Heart left ventricle (tissue), 16 donors: ENCODE measurements at regions of chr1 and their contacts with region 1.

Region 1: DNA sequence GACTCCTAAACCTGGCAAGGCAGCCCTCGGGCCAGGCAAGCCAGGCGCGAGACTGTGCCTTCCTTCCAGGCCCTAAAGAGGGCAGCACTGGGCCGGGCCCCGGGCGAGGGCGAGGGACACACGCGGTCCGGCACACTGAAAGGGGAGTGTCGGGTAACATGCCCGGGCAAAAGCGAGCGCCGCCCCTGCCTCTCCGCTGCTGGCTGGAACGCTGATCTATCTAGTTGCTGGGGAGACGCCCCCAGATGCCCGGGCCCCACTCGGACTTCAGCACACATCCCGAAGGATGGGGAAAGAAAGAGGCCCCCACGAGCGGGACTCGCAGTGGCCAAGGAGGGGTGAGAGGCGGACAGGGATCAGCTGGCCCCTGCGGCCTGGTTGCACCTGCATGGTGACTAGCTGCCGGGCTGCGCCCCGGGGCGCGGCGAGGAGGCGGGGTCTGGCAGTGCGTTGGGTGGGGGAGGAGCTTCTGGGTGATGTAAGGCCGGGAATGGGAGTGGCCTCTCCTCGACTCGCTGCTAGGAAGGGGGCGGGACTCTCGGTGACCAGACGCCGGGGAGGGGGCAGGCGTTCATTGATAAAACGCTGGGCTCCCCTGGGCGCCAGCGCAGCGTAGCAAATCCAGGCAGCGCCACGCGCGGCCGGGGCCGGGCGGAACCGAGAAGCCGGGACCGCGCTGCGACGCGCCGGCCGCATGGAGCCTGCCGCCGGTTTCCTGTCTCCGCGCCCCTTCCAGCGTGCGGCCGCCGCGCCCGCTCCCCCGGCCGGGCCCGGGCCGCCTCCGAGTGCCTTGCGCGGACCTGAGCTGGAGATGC is at the start of gene PLK3:
- DNase-seq: peak; percentile 98 to 99 (median 99)
- ATAC-seq: peak; percentile 96 to 98 (median 97)
- H3K4me3 ChIP-seq: peak within 1 kb of the TSS; percentile 67 to 97 (median 88)
- H3K27ac ChIP-seq: peak within 1 kb of the TSS; percentile 77 to 98 (median 94)
- H3K4me1 ChIP-seq: peaks cover 3 to 45% (median 31%) of the 10 kb centered on the region in 12 donors
- H3K27me3 ChIP-seq: no peaks in the 10 kb centered on the region
- CTCF ChIP-seq: peak; percentile 89 to 98 (median 94)
- POLR2A ChIP-seq: peak; percentile 70 to 99
- total RNA-seq, gene PLK3: 4.5 to 17.9 (median 6.6) TPM

Region 2: DNA sequence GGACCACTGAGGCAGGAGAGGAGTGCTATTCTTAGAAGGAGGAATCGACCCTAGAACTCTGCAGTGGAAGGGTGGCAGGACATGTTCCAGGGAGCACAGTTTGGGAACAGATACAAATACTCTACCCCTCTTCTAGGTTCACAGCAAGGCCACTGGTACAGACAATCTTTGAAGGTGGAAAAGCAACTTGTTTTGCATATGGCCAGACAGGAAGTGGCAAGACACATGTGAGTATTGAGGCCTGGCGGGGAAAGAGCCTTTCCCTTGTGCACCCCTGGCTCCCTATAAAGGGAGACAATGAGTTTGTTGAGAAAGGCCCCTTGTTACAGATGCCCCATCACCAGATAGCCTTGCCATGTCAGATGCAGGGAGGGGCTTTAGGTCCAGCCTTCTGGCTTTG is 42.6 kb before region 1 on chr1:
- intact Hi-C with region 1: no loop called
- DNase-seq: no peak
- ATAC-seq: no peak
- H3K4me3 ChIP-seq: no peak overlapping the region
- H3K27ac ChIP-seq: no peak overlapping the region
- H3K4me1 ChIP-seq: peaks cover 0 to 5% (median 0%) of the 10 kb centered on the region in 12 donors
- H3K27me3 ChIP-seq: no peaks in the 10 kb centered on the region
- CTCF ChIP-seq: no peak
- POLR2A ChIP-seq: no peak

Region 3: DNA sequence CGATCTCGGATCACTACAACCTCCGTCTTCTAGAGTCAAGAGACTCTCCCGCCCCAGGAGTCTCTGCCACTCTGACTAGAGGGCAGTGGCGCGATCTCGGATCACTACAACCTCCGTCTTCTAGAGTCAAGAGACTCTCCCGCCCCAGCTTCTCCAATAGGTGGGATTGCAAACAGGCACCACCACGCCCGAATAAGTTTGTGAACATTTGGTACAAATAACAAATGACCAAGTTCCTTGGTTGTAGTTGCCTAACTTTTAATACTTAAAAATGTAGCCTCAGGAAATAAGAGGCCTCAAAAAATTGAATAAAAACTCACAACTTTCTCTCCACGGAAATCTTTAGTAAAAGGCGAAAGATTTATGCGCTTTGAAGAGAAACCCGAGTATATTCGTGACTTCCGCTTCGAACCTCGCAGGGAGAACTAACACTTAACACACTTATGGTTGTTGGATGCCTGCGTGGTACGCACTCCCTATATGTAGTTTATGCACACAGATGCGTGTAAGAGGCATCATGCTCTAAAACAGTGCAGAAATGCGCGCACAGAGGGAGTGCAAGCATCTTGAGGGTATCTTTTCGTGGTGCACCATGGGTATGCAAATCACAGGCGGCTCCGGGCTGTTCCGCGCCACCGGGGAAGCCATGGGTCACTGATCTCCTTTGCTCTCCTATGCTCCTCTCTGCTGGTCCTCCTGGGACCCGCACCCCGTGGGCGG is 19.8 kb after region 1 on chr1:
- intact Hi-C with region 1: loop called in 3 of 10 experiments (anchors 2 kb)
- DNase-seq: peak; percentile 82 to 90 (median 85)
- ATAC-seq: peak; percentile 89 to 93 (median 89)
- H3K4me3 ChIP-seq: peak overlapping the region; percentile 32 to 79 (median 64)
- H3K27ac ChIP-seq: peak overlapping the region; percentile 85 to 100 (median 94)
- H3K4me1 ChIP-seq: peaks cover 0 to 33% (median 15%) of the 10 kb centered on the region in 12 donors
- H3K27me3 ChIP-seq: no peaks in the 10 kb centered on the region
- CTCF ChIP-seq: peak in 3 of 12 donors; percentile 8 to 26 (median 10)
- POLR2A ChIP-seq: peak; percentile 52 to 61

Region 4: DNA sequence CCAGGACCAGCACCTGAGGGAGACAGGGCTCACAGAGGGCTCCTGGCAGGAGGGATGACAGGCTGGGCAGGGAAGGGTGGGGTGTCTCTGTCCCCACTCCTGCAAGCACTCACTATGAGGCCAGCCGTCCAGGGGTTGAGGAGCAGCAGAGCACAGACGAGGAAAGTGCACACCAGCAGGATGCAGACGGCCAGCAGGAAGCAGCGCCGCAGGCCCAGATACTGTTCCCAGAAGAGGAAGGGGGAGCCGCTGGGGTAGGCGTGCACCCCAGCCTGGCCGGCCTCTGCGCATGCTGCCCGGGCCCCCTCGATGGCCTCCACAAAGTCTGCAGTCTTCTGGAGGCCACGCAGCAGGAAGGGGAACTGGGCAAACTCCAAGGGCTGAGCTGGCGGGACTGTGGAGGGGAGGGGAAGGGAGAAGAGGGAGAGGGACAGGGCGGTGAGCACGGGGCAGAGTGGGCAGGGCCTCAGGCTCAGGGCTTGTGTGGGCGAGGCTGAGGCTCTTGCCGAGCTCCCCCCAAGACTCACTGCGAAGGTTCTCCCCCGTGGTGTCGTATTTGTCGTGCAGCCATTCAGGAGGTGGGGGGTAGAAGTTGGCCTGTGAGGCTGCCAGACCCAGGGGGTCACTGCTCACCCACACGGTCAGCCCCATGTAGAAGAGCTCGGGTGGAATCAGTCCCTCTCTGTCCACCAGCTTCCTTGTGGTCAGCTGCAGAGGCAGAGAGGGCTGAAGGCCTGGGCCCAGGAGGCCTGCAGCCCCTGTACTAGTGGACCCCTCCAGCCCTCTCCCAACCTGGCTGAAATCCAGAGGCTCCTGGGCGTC is 26.6 kb after region 1 on chr1:
- intact Hi-C with region 1: loop called in 3 of 10 experiments (anchors 2 kb)
- DNase-seq: peak; percentile 78 to 85 (median 81)
- ATAC-seq: peak; percentile 62 to 90 (median 84)
- H3K4me3 ChIP-seq: peak overlapping the region in 7 of 12 donors; percentile 11 to 37 (median 24)
- H3K27ac ChIP-seq: peak overlapping the region in 7 of 12 donors; percentile 19 to 76 (median 67)
- H3K4me1 ChIP-seq: peaks cover 0 to 26% (median 6%) of the 10 kb centered on the region in 12 donors
- H3K27me3 ChIP-seq: no peaks in the 10 kb centered on the region
- CTCF ChIP-seq: no peak
- POLR2A ChIP-seq: no peak